Activated CD4-positive, alpha-beta T cell treated with anti-CD3 and anti-CD28 coated beads, Interleukin-2, amount 10 ng/mL, durations not matched to agents 24 days and 14 days (primary cell): ENCODE measurements at regions of chr1 and their contacts with region 1.

Region 1: DNA sequence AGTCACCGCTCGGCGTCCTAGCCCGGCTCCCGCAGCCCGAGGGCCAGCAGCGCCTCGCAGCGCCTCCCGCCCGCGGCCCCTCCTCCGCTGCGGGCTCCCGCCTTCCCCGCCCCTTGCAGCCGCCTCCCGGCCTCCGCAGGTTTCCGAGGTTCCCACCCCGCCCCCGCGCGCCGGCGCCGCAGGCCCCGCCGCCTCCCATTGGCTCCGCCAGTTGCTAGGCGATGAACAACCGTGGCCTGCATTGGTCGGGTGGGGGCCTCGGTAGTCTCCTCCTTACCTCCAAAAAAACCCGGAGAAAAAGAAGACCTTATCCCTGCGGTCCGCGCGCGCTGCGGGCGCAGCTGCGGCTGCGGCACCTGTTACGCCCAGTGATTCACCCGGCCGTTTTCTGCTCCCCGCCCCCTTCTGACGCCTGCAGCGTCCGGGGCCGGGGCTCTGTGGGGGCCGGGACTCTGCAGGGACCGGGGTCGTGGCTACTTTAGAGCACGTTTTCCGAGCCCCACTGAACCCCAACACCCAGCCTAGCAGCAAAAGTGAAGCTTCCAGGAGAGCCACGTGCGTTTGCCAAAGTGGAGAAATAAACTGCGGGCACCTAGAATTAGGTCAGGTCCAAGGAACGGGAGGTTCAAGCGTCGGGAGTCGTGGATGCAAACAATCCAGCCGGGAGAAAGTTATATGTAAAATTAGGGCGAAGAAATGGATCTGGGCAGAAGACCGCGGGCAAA is at the start of gene SSX2IP:
- DNase-seq: peak; percentile 100
- H3K4me3 Mint-ChIP-seq: peak within 1 kb of the TSS; percentile 98
- H3K27ac Mint-ChIP-seq: peak within 1 kb of the TSS; percentile 95
- H3K4me1 Mint-ChIP-seq: peaks cover 43% of the 10 kb centered on the region
- H3K27me3 Mint-ChIP-seq: peaks cover 4% of the 10 kb centered on the region
- total RNA-seq, gene SSX2IP: 10.0 and 11.8 TPM in 2 replicates

Region 2: GRCh38 chr1:84721152-84721551 is 30.6 kb after region 1 on chr1:
- intact Hi-C with region 1: loop called (anchors 2 kb)
- DNase-seq: no peak
- H3K4me3 Mint-ChIP-seq: no peak overlapping the region
- H3K27ac Mint-ChIP-seq: no peak overlapping the region
- H3K4me1 Mint-ChIP-seq: peaks cover 2% of the 10 kb centered on the region
- H3K27me3 Mint-ChIP-seq: peaks cover 4% of the 10 kb centered on the region